Ascending aorta (tissue), 2 donors: ENCODE measurements at regions of chr7 and their contacts with region 1.

Region 1: DNA sequence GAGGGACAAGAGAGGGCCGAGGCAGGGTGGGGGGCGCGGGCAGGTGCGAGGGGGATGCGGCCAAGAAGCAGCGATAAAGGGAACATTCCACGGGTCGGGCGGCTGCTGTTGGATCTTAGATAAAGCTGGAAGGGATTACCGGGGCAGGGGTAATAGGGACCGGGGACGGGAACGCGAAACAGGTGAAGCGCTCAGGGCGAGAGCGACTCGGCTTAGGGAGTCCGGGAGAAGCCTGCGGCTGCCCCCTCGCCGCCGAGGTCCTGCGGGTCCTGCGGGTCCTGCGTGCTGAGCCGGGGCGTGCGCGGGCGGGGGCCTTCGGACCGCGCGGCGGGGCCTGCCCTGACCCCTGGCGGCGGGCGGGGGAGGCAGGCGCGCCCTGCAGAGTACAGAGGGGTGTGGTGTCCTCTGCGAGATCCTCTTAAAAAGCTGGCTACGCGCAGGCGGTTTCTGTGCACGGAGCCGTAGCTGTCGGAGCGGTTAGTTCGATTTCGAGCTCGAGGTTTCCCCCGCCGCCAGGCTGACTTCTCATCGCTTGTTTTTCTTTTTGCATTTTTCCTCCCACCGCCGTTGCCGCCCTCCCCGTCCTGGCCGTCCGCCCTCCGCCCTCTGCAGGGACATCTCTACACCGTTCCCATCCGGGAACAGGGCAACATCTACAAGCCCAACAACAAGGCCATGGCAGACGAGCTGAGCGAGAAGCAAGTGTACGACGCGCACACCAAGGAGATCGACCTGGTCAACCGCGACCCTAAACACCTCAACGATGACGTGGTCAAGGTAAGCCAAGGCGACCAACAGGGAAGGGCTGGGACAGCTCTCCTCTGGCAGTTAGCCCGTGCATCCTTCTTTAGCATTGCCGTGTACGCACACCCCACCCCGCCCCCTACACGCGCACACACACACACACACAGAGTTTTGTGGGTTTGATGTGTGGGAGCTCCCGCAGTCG is 1.4 kb downstream of the CAV1 start:
- DNase-seq: peak; percentile 14 to 89
- H3K4me3 ChIP-seq: peak overlapping the region; percentile 75 to 98
- H3K27ac ChIP-seq: peak overlapping the region; percentile 97 to 99
- H3K4me1 ChIP-seq: peaks cover 0 to 18% of the 10 kb centered on the region in 2 donors
- H3K27me3 ChIP-seq: no peaks in the 10 kb centered on the region
- CTCF ChIP-seq: peak; percentile 49 to 97 (median 62)

Region 2: DNA sequence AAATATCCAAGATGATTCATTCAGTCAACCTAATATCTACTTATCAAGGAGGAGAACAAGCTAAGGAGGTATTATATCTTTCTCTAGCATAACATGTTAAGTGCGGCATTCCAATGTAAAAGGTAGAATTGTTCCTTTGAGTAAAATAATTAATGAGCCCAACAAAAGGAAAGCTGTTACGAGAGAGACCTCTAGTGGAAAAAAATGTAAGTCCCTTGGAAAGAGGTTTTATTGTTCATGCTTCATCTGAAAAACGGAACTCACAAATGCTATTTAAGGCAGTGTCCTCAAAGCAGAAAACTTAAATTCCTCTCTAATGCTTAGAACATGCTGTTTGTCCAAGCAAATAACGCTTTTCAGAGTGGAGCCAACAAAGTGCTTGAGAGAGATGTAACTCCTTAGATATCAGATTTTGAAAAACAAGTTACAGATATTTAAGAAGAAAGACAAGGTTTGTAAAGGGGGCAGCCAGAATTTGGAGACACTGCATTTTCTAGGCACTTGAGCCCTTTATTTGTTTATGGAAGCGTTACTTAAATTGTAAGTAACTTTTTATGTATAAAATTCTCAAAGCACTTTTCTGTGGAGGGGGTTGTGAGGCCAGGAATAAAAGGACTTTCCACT is 615.5 kb before region 1 on chr7:
- intact Hi-C with region 1: no loop called
- DNase-seq: no peak
- H3K4me3 ChIP-seq: no peak overlapping the region
- H3K27ac ChIP-seq: no peak overlapping the region
- H3K4me1 ChIP-seq: no peaks in the 10 kb centered on the region
- H3K27me3 ChIP-seq: no peaks in the 10 kb centered on the region
- CTCF ChIP-seq: peak in 1 of 3 experiments; percentile 54

Region 3: GRCh38 chr7:116211006-116211912 is 314.9 kb before region 1 on chr7:
- intact Hi-C with region 1: loop called (anchors 5 kb)
- DNase-seq: peak; percentile 64 to 93
- H3K4me3 ChIP-seq: peak overlapping the region; percentile 85 to 89
- H3K27ac ChIP-seq: peak overlapping the region; percentile 91 to 99
- H3K4me1 ChIP-seq: peaks cover 5 to 22% of the 10 kb centered on the region in 2 donors
- H3K27me3 ChIP-seq: no peaks in the 10 kb centered on the region
- CTCF ChIP-seq: no peak

Region 4: DNA sequence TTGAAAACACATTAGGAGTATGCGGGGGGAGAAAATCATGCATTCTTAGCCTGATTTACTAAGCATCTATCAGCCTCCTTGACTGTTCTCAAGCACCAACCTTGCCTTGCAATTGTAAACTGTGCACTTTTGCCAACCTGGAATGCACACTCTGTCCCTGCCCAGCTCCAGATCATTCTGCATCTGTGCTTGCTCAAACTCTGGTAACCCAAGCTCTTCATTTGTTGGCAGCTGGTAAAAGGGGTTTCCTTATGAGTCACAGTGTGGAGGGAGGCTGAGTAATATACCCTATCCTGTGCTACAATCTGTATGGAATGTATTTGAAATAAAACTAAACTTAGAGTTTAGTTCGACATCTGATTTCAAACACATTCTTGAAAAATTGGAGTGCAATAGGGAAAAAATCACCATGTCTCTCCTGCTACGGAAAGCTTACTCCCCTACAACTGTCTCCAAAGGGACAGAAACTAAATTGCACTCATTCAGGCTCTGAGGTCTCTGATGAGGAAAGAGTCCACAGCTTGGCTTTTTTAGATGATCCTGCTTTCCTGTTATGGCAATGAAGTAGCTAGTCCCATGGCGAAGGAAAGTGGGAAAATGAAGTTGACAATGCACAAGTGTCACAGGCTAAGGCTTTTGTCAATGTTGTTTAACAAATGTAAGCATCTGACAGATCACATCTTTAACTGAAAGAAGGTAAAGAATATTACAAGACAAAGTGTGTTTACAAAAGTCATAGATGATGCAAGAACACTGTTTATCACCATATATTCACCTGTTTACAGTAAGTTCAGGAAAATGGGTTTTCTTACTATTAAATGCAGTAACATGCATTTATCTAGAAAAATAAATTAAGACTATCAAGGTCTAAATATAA is 254.0 kb before region 1 on chr7:
- intact Hi-C with region 1: loop called (anchors 5 kb)
- DNase-seq: peak; percentile 20 to 82
- H3K4me3 ChIP-seq: peak overlapping the region in 1 of 2 donors; percentile 11
- H3K27ac ChIP-seq: peak overlapping the region; percentile 69
- H3K4me1 ChIP-seq: peaks cover 12 to 34% of the 10 kb centered on the region in 2 donors
- H3K27me3 ChIP-seq: no peaks in the 10 kb centered on the region
- CTCF ChIP-seq: no peak

Region 5: DNA sequence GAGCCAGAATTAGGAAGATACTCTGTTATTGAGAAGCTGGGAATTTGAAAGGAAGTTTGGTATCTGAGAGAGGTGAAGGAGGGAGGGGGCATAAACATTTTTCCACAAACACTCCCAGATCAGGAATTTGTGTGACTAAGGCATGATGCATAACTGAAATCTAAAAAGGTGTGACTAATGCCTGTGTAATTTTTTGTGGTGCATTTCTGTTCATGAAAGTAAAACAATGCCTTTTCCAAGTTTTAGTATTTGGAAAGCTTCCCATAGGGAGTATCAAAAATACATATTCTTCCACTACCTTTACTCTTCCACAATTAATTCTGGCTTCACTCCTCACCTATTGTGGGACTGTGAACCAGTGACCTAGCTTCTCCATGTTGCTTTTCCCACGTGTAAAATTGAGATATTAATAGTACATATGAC is 83.1 kb before region 1 on chr7:
- intact Hi-C with region 1: loop called (anchors 2 kb)
- DNase-seq: no peak
- H3K4me3 ChIP-seq: no peak overlapping the region
- H3K27ac ChIP-seq: peak overlapping the region; percentile 76 to 82
- H3K4me1 ChIP-seq: peaks cover 11 to 42% of the 10 kb centered on the region in 2 donors
- H3K27me3 ChIP-seq: no peaks in the 10 kb centered on the region
- CTCF ChIP-seq: no peak

Region 6: GRCh38 chr7:116543664-116544063 is 17.5 kb after region 1 on chr7:
- intact Hi-C with region 1: no loop called
- DNase-seq: no peak
- H3K4me3 ChIP-seq: no peak overlapping the region
- H3K27ac ChIP-seq: peak overlapping the region; percentile 62 to 72
- H3K4me1 ChIP-seq: peaks cover 0 to 32% of the 10 kb centered on the region in 2 donors
- H3K27me3 ChIP-seq: no peaks in the 10 kb centered on the region
- CTCF ChIP-seq: no peak

Region 7: GRCh38 chr7:116560021-116560970 is 34.1 kb after region 1 on chr7:
- intact Hi-C with region 1: loop called (anchors 2 kb)
- DNase-seq: peak in 1 of 2 donors; percentile 74
- H3K4me3 ChIP-seq: no peak overlapping the region
- H3K27ac ChIP-seq: peak overlapping the region; percentile 80 to 92
- H3K4me1 ChIP-seq: peaks cover 15 to 43% of the 10 kb centered on the region in 2 donors
- H3K27me3 ChIP-seq: no peaks in the 10 kb centered on the region
- CTCF ChIP-seq: no peak

Region 8: DNA sequence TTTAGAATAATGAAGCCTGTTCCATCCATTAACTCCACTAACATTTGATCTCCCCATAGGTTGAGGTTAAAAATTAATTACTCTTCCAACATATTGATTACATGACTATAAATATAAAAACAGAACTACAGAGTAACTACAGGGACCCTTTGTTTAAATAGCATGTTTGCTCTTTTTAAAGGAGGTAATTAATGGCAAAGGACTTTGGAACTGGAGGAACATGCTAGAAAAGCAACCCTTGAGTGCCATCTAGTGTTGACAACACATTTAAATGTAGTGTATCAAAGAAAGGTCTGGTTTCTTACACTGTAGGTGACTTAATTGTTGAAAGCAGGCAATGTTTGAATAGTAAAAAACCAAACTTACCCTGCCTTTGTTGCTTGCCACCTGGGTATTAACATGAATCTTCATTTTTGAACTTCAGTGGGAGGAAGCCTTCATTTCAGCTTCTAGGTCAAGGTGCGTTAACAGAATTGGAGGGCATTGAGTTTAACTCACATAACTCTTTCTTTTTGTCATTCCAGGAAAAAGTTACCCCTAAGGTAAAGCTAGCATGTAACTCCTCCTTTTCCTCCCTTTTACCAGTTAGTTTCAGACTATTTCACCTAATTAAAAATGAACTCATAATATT is 283.6 kb after region 1 on chr7:
- intact Hi-C with region 1: loop called (anchors 5 kb)
- DNase-seq: no peak
- H3K4me3 ChIP-seq: no peak overlapping the region
- H3K27ac ChIP-seq: peak overlapping the region in 1 of 2 donors; percentile 3
- H3K4me1 ChIP-seq: peaks cover 0 to 5% of the 10 kb centered on the region in 2 donors
- H3K27me3 ChIP-seq: no peaks in the 10 kb centered on the region
- CTCF ChIP-seq: peak; percentile 65 to 77 (median 65)